Heart right ventricle (tissue), 16 donors: ENCODE measurements at regions of chr4 and their contacts with region 1.

Region 1: GRCh38 chr4:5045097-5045496 is 6.2 kb upstream of the STK32B start:
- DNase-seq: peak in 1 of 2 donors; percentile 15
- ATAC-seq: peak in 6 of 8 donors; percentile 41 to 77 (median 68)
- H3K4me3 ChIP-seq: no peak overlapping the region
- H3K27ac ChIP-seq: peak overlapping the region in 1 of 10 donors; percentile 63
- H3K4me1 ChIP-seq: peaks cover 0 to 40% (median 0%) of the 10 kb centered on the region in 9 donors
- H3K27me3 ChIP-seq: peaks cover 0 to 50% (median 6%) of the 10 kb centered on the region in 7 donors
- CTCF ChIP-seq: no peak

Region 2: DNA sequence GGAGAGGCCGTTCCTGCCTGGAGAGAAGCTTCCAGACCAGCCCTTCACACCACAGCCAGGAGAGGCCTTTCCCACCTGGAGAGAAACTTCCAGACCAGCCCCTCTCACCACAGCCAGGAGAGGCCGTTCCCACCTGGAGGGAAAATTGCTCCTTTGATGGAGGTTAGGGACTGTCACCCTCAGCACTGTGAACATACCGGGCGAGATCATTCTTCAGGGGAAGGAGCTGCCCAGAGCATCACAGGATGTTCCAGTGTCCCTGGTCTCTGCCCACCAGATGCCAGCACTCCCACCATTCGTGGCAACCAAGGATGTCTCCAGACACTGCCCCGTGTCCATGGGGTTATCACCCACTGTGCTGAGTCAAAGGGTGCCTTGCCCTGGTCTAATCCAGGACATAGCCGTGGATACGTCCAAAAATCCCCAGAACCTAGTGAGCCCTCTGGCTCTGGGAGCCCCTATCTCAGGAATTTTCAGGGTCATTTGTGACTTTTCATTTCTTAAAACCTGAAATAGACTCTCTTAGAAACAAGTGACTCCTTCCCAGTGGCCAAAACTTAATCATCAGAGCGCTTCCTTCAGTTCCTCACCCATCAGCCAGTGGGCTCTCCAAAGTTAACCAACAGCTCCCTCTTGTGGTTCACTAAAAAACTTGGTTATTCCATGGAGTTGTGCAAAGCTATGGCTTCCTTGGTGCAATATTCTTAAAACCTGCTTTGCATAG is 767.6 kb after region 1 on chr4:
- intact Hi-C with region 1: loop called in 7 of 10 experiments (anchors 2 to 10 kb)
- DNase-seq: peak in 1 of 2 donors; percentile 52
- ATAC-seq: peak in 7 of 8 donors; percentile 68 to 80 (median 72)
- H3K4me3 ChIP-seq: no peak overlapping the region
- H3K27ac ChIP-seq: no peak overlapping the region
- H3K4me1 ChIP-seq: no peaks in the 10 kb centered on the region
- H3K27me3 ChIP-seq: no peaks in the 10 kb centered on the region
- CTCF ChIP-seq: peak; percentile 50 to 81 (median 71)